A673 (cell line): ENCODE measurements at regions of chr11 and their contacts with region 1.

Region 1: DNA sequence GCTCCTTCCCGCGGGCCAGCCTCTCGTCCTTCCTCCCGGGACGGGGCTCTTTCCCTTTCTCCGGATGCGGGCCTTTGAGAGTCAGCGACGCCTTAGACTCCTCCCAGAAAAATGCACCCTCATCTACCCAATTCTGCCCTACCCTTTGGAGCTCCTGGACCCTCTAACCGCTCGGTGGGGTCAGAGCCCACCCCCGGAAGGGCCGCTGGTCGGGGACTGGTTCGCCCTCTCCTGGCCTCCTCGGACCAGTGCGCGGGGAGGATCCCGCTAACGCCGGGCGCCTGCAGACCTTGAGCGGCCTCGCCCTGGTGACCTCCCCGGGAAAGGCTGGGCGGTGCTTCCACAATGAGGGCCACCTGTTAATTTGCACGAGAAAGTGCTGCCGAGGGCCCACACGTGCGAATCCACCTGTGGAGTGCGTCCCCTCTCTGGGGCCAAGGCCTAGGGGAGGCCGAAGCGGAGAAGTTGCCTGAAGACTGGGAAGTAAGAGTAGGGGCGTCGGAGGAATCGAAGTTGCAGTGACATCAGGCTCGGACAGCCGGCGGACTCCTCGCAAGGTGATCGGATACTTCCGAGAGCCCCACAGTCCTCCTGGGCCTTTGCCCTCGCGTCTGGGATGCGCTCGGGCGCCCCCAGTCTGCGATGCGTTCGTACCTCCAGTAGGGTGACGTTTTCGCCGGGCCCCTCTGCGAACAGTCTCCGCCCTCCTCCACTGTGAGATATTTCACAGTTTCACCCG is 61.5 kb downstream of the ENDOD1 start:
- DNase-seq: peak; percentile 96
- H3K4me3 ChIP-seq: peak overlapping the region; percentile 52
- H3K27ac ChIP-seq: no peak overlapping the region
- H3K4me1 ChIP-seq: peaks cover 11% of the 10 kb centered on the region
- H3K27me3 ChIP-seq: no peaks in the 10 kb centered on the region
- CTCF ChIP-seq: peak; percentile 93

Region 2: DNA sequence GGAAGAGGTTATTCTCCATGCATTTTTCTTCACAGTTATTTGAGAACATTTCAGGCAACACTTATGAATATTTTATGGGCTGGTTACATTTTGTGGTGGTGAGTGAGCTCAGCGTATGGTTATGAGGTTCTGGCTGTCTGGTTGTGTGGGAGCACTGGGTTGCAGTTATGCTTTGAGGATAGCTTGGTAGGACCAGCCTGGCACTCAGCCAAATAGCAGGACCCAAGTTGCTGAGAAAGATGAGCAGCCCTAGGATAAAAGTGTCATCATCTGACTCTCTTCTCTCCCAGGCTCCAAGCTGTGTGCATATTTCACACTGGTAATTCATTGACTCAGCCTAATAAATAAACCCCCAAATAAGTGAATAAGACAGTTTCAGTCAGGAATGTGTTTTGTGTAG is 92.5 kb before region 1 on chr11:
- CTCF ChIA-PET with region 1: no interaction called
- POLR2A ChIA-PET with region 1: no interaction called
- intact Hi-C with region 1: no loop called
- DNase-seq: no peak
- H3K4me3 ChIP-seq: no peak overlapping the region
- H3K27ac ChIP-seq: no peak overlapping the region
- H3K4me1 ChIP-seq: no peaks in the 10 kb centered on the region
- H3K27me3 ChIP-seq: peaks cover 8% of the 10 kb centered on the region
- CTCF ChIP-seq: no peak

Region 3: DNA sequence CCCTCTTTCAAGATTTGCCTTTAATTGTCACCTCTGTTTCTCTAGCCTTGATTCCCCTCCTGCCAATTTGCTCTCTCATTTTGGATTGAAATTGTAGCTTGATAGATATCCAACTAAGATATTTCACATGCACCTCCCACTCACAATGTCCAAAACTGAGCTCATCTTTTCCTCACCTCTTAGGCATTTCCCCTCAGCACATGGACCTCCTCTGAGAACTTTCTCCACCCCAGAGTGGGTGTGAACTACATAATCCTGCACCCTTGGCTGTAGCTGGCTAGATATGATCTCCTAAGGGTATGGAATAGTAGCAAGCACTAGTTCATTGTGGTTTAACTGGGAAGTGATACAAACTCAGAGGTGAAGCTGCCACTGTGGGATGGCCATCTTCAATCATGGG is 171.4 kb after region 1 on chr11:
- CTCF ChIA-PET with region 1: no interaction called
- POLR2A ChIA-PET with region 1: no interaction called
- intact Hi-C with region 1: no loop called
- DNase-seq: no peak
- H3K4me3 ChIP-seq: no peak overlapping the region
- H3K27ac ChIP-seq: no peak overlapping the region
- H3K4me1 ChIP-seq: peaks cover 7% of the 10 kb centered on the region
- H3K27me3 ChIP-seq: no peaks in the 10 kb centered on the region
- CTCF ChIP-seq: no peak

Region 4: DNA sequence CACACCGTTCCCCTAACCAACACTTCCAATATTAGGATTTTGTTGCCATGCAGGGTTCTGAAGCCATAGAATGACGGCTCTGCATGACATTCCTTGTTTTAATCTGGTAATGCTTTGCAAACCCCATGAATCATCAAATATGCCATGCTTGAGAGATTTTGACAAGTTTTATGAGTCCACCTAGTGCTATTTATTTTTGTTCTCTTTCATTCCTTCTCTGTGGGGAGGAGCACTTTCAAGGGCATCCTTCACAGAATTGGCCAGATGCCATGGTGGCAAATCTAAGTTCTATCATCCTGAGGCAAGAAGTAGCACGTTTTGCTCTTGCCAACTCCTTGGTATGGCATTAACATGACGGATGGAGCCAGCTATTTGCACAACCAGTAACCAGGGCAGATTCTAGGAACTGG is 370.0 kb after region 1 on chr11:
- CTCF ChIA-PET with region 1: no interaction called
- POLR2A ChIA-PET with region 1: no interaction called
- intact Hi-C with region 1: loop called (anchors 5 kb)
- DNase-seq: peak; percentile 96
- H3K4me3 ChIP-seq: no peak overlapping the region
- H3K27ac ChIP-seq: no peak overlapping the region
- H3K4me1 ChIP-seq: peaks cover 26% of the 10 kb centered on the region
- H3K27me3 ChIP-seq: peaks cover 35% of the 10 kb centered on the region
- CTCF ChIP-seq: no peak

Region 5: GRCh38 chr11:95705485-95706124 is 554.5 kb after region 1 on chr11:
- CTCF ChIA-PET with region 1: interaction called, 38 read pairs
- POLR2A ChIA-PET with region 1: no interaction called
- intact Hi-C with region 1: loop called (anchors 1 kb)
- DNase-seq: peak; percentile 85
- H3K4me3 ChIP-seq: no peak overlapping the region
- H3K27ac ChIP-seq: no peak overlapping the region
- H3K4me1 ChIP-seq: no peaks in the 10 kb centered on the region
- H3K27me3 ChIP-seq: no peaks in the 10 kb centered on the region
- CTCF ChIP-seq: peak; percentile 99

Region 6: GRCh38 chr11:95764267-95764898 is 613.3 kb after region 1 on chr11:
- CTCF ChIA-PET with region 1: no interaction called
- POLR2A ChIA-PET with region 1: no interaction called
- intact Hi-C with region 1: loop called (anchors 1 kb)
- DNase-seq: peak; percentile 77
- H3K4me3 ChIP-seq: no peak overlapping the region
- H3K27ac ChIP-seq: no peak overlapping the region
- H3K4me1 ChIP-seq: no peaks in the 10 kb centered on the region
- H3K27me3 ChIP-seq: no peaks in the 10 kb centered on the region
- CTCF ChIP-seq: peak; percentile 86

Region 7: GRCh38 chr11:96424693-96425092 is 1273.6 kb after region 1 on chr11:
- CTCF ChIA-PET with region 1: interaction called, 4 read pairs
- POLR2A ChIA-PET with region 1: no interaction called
- intact Hi-C with region 1: loop called (anchors 2 kb)
- DNase-seq: peak; percentile 46
- H3K4me3 ChIP-seq: no peak overlapping the region
- H3K27ac ChIP-seq: no peak overlapping the region
- H3K4me1 ChIP-seq: no peaks in the 10 kb centered on the region
- H3K27me3 ChIP-seq: no peaks in the 10 kb centered on the region
- CTCF ChIP-seq: no peak